Sigmoid colon (tissue), 7 donors: ENCODE measurements at regions of chr7 and their contacts with region 1.

Region 1: GRCh38 chr7:55255496-55256435 is 109.4 kb upstream of the LANCL2 start:
- DNase-seq: peak; percentile 92
- H3K4me3 ChIP-seq: peak overlapping the region; percentile 36 to 68 (median 60)
- H3K27ac ChIP-seq: peak overlapping the region; percentile 51 to 73 (median 59)
- H3K4me1 ChIP-seq: peaks cover 0 to 19% (median 10%) of the 10 kb centered on the region in 4 donors
- H3K27me3 ChIP-seq: peaks cover 0 to 12% (median 4%) of the 10 kb centered on the region in 3 donors
- CTCF ChIP-seq: peak; percentile 81 to 89 (median 87)
- EP300 ChIP-seq: no peak
- POLR2A ChIP-seq: no peak

Region 2: GRCh38 chr7:54773472-54774399 is 482.0 kb before region 1 on chr7:
- intact Hi-C with region 1: loop called (anchors 1 kb)
- DNase-seq: peak; percentile 89
- H3K4me3 ChIP-seq: peak overlapping the region; percentile 7 to 42 (median 32)
- H3K27ac ChIP-seq: peak overlapping the region in 1 of 4 donors; percentile 28
- H3K4me1 ChIP-seq: peaks cover 0 to 8% (median 3%) of the 10 kb centered on the region in 4 donors
- H3K27me3 ChIP-seq: peaks cover 0 to 8% (median 0%) of the 10 kb centered on the region in 3 donors
- CTCF ChIP-seq: peak; percentile 63 to 81 (median 73)
- EP300 ChIP-seq: no peak
- POLR2A ChIP-seq: no peak

Region 3: GRCh38 chr7:54788664-54789063 is 467.1 kb before region 1 on chr7:
- intact Hi-C with region 1: loop called (anchors 1 kb)
- DNase-seq: peak; percentile 72
- H3K4me3 ChIP-seq: no peak overlapping the region
- H3K27ac ChIP-seq: no peak overlapping the region
- H3K4me1 ChIP-seq: peaks cover 0 to 8% (median 4%) of the 10 kb centered on the region in 4 donors
- H3K27me3 ChIP-seq: no peaks in the 10 kb centered on the region
- CTCF ChIP-seq: peak; percentile 29 to 72 (median 48)
- EP300 ChIP-seq: no peak
- POLR2A ChIP-seq: no peak

Region 4: GRCh38 chr7:55018361-55019190 is 237.2 kb before region 1 on chr7 and contains the start of gene EGFR:
- intact Hi-C with region 1: loop called (anchors 2 kb)
- DNase-seq: peak; percentile 94
- H3K4me3 ChIP-seq: peak within 1 kb of the TSS; percentile 80 to 89 (median 82)
- H3K27ac ChIP-seq: peak within 1 kb of the TSS; percentile 93 to 97 (median 94)
- H3K4me1 ChIP-seq: peaks cover 0 to 28% (median 26%) of the 10 kb centered on the region in 4 donors
- H3K27me3 ChIP-seq: no peaks in the 10 kb centered on the region
- CTCF ChIP-seq: no peak
- EP300 ChIP-seq: no peak
- POLR2A ChIP-seq: peak in 1 of 2 donors; percentile 40
- total RNA-seq, gene EGFR: 35.6 to 61.5 (median 40.8) TPM

Region 5: DNA sequence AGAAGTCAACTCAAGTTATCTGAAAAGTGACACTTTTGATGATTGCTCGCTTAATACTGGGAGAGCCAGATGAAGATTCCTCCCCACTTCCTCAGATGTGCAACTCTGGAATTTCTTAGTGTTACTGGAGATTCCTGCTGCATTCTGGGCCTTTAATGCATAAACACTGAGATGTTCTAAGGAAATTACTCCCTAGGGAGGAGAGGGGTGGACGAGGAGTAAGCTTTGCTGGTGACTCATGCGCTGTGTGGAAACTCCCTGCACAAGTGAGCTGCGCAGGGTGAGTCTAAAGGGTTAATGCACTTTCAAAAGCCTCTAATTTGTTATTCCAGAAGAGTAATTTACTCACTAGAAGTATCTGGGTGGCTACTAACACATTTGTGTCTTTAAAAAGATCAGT is 190.7 kb before region 1 on chr7:
- intact Hi-C with region 1: loop called (anchors 10 kb)
- DNase-seq: peak; percentile 90
- H3K4me3 ChIP-seq: peak overlapping the region in 2 of 4 donors; percentile 0 to 21
- H3K27ac ChIP-seq: peak overlapping the region; percentile 75 to 86 (median 80)
- H3K4me1 ChIP-seq: peaks cover 0 to 59% (median 55%) of the 10 kb centered on the region in 4 donors
- H3K27me3 ChIP-seq: no peaks in the 10 kb centered on the region
- CTCF ChIP-seq: no peak
- EP300 ChIP-seq: no peak
- POLR2A ChIP-seq: no peak

Region 6: GRCh38 chr7:55132890-55133551 is 122.7 kb before region 1 on chr7:
- intact Hi-C with region 1: loop called (anchors 10 kb)
- DNase-seq: peak; percentile 83
- H3K4me3 ChIP-seq: no peak overlapping the region
- H3K27ac ChIP-seq: peak overlapping the region; percentile 81 to 90 (median 87)
- H3K4me1 ChIP-seq: peaks cover 0 to 64% (median 61%) of the 10 kb centered on the region in 4 donors
- H3K27me3 ChIP-seq: no peaks in the 10 kb centered on the region
- CTCF ChIP-seq: no peak
- EP300 ChIP-seq: peak in 2 of 4 donors; percentile 36 to 80
- POLR2A ChIP-seq: no peak

Region 7: DNA sequence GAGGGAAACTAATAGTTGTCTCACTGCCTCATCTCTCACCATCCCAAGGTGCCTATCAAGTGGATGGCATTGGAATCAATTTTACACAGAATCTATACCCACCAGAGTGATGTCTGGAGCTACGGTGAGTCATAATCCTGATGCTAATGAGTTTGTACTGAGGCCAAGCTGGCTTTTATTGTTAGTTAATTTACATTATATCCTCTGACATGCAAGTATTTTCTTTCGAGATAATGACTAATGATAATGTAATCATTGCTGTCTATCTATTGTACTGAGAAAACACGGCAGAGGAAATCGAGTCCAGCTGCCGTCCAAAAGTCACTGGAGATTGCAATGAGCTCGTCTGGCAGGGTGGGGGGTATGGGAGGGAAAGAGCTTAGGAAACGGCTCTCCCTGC is 63.0 kb before region 1 on chr7:
- intact Hi-C with region 1: loop called (anchors 10 kb)
- DNase-seq: no peak
- H3K4me3 ChIP-seq: no peak overlapping the region
- H3K27ac ChIP-seq: peak overlapping the region in 1 of 4 donors; percentile 34
- H3K4me1 ChIP-seq: no peaks in the 10 kb centered on the region
- H3K27me3 ChIP-seq: no peaks in the 10 kb centered on the region
- CTCF ChIP-seq: no peak
- EP300 ChIP-seq: no peak
- POLR2A ChIP-seq: no peak

Region 8: DNA sequence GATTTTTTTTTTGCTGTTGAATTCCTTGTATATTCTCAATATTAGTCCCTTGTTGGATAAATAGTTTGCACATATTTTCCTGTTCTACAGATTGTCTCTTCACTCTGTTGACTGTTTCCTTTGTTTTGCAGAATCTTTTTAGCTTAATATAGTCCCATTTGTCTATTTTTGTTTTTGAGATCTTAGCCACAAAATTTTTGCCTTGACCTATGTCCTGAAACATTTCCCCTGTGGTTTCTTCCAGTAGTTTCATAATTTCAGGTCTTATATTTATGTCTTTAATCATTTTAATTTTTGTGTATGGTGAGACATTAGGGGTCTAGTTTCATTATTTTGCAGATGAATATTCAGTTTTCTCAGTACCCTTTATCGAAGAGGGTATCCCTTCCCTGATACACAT is 202.0 kb after region 1 on chr7:
- intact Hi-C with region 1: no loop called
- DNase-seq: no peak
- H3K4me3 ChIP-seq: no peak overlapping the region
- H3K27ac ChIP-seq: no peak overlapping the region
- H3K4me1 ChIP-seq: no peaks in the 10 kb centered on the region
- H3K27me3 ChIP-seq: no peaks in the 10 kb centered on the region
- CTCF ChIP-seq: no peak
- EP300 ChIP-seq: no peak
- POLR2A ChIP-seq: no peak